ENCODE measurements at regions of chr20 and their contacts with region 1.

Region 1: DNA sequence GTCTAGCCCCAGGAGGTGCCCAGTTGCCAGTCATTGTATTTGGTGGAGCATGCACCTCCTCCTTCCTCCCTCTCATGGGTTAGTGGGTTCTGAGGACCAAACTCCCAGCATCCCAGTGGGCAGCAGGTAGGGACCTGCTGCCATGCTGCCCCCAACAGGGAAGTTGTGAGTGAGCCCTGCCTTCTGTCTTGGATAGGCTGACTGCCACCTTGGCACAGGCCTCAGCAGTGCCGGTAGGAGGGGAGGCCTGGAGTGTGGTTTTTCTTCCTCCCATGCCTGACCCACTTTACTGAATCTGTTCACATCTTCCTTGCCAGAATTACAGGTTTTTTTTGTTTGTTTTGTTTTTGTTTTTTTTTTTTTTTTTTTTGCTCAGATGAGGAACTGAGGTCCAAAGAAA is 24.5 kb downstream of the PLCG1 start:
- DNase-seq: no peak
- ATAC-seq: no peak
- H3K4me3 Mint-ChIP-seq: no peak overlapping the region
- H3K27ac Mint-ChIP-seq: peak overlapping the region; percentile 72
- H3K4me1 Mint-ChIP-seq: peaks cover 59% of the 10 kb centered on the region
- H3K27me3 Mint-ChIP-seq: no peaks in the 10 kb centered on the region

Region 2: DNA sequence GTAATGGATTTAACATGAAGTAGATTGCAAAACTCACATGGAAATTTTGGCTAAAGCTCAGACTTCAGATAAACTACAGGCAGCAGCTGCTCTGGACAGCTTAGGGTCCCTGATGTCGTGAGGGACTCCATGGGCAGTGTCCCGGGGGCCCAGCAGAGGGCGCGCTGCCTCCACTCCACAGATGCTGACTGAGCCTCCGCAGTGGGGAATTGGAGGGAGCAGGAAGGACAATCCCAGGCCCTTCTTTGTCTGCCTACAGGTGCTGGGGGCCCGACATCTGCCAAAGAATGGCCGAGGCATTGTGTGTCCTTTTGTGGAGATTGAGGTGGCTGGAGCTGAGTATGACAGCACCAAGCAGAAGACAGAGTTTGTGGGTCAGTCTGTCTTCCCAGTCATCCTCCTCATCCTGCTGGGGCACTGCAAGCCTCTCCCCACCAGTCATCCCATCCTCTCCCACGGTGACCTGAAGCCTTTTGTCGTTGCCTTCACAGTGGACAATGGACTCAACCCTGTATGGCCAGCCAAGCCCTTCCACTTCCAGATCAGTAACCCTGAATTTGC is 11.4 kb after region 1 on chr20:
- CTCF ChIA-PET with region 1: interaction called, 17 read pairs
- POLR2A ChIA-PET with region 1: interaction called, 8 read pairs
- intact Hi-C with region 1: no loop called
- DNase-seq: peak; percentile 78
- ATAC-seq: peak; percentile 78
- H3K4me3 Mint-ChIP-seq: no peak overlapping the region
- H3K27ac Mint-ChIP-seq: peak overlapping the region; percentile 65
- H3K4me1 Mint-ChIP-seq: peaks cover 6% of the 10 kb centered on the region
- H3K27me3 Mint-ChIP-seq: no peaks in the 10 kb centered on the region

Region 3: GRCh38 chr20:41317536-41318270 is 155.8 kb after region 1 on chr20 and contains the start of gene ZHX3:
- CTCF ChIA-PET with region 1: no interaction called
- POLR2A ChIA-PET with region 1: no interaction called
- intact Hi-C with region 1: loop called in 1 of 2 experiments (anchors 1 kb)
- DNase-seq: peak; percentile 98
- ATAC-seq: peak; percentile 99
- H3K4me3 Mint-ChIP-seq: peak within 1 kb of the TSS; percentile 84
- H3K27ac Mint-ChIP-seq: peak within 1 kb of the TSS; percentile 66
- H3K4me1 Mint-ChIP-seq: peaks cover 31% of the 10 kb centered on the region
- H3K27me3 Mint-ChIP-seq: no peaks in the 10 kb centered on the region
- total RNA-seq, gene ZHX3: 12.8 to 15.4 TPM